Natural killer cell (primary cell): ENCODE measurements at regions of chr16 and their contacts with region 1.

Region 1: DNA sequence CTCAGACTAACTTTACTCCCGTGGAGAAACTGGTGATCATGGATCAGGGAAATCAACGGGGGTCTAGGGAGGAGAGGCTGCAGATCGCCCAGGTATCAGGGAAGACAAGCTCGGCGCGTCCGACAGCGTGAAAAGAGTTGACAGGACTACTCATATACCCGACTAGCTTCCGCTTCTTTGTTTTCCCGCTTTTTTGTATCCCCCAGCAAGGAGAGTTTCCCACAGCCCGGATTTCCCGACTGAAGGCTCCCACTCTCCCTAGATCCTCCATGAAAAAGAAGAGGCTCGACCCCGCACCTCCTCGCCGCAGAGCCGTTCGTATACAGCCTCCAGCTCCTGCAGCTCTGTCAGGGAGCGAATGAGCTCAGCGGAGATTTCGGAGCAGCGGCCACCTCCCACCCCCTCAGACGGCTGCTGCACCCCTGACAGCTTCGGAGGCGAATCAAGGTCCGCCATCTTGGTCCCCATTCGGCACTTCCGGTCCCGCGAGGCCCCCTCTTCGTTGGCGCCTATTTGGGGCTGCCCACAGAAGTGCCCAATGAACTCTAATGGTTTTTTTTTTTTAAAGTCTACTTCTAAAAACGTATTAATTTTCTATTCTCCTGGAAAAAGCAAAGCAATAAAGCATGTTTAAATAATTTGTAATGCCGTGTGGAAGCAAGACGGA is at the start of gene COG4:
- DNase-seq: peak; percentile 85 to 96
- ATAC-seq: peak; percentile 81 to 89 (median 84)
- H3K4me3 ChIP-seq: peak within 1 kb of the TSS; percentile 84
- H3K4me3 Mint-ChIP-seq: peak within 1 kb of the TSS; percentile 100
- H3K27ac ChIP-seq: peak within 1 kb of the TSS; percentile 90
- H3K27ac Mint-ChIP-seq: peak within 1 kb of the TSS; percentile 99 to 100
- H3K4me1 ChIP-seq: peaks cover 37% of the 10 kb centered on the region
- H3K4me1 Mint-ChIP-seq: peaks cover 60 to 61% of the 10 kb centered on the region in 2 donors
- H3K27me3 ChIP-seq: no peaks in the 10 kb centered on the region
- H3K27me3 Mint-ChIP-seq: no peaks in the 10 kb centered on the region
- CTCF ChIP-seq: no peak
- total RNA-seq, gene COG4: 29.5 to 44.4 (median 31.6) TPM

Region 2: DNA sequence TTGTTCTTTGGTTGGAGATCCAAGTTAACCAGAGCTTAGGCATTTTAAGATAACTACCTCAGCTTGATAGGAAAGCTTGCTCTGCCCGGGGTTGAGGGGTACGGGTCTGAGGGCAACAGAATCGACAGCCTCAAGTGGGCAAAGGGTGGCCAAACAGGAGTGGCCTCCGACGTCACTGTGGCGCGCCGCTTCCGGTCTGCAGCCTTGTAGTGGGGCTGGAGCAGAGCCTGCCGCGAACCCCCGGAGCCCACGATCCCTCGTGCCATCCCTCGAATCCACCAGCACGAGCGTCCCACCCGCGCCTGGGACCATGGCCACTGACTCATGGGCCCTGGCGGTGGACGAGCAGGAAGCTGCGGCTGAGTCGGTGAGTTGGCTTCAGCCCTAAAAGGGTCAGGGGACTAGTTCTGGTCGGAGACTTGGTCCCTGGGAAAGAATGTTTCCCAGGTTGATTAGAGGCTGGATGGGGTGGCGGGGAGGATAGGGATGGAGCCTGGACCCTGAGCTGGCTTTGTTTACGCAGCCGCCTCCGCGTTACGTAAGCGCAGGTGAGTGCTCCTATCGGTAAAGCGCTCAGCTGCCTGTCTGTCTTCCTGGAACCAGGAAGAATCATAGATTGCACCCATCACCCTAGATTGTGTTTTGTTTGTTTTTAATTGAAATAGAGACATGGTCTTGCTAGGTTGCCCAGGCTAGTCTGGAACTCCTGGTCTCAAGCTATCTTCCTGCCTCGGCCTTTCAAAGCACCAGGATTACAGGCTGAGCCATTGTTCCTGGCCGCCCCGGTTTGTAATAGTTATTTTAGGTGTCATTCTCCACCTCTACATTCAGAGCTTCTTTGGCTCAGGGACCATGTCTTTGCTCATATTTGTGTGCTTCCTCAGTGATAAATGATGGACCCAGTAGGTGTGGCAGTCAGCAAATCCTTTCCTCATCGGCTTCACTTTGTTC is 223.9 kb before region 1 on chr16 and contains the start of gene DDX19B:
- intact Hi-C with region 1: loop called (anchors 2 kb)
- DNase-seq: peak; percentile 61 to 75
- ATAC-seq: peak; percentile 79 to 84 (median 84)
- H3K4me3 ChIP-seq: peak within 1 kb of the TSS; percentile 82
- H3K4me3 Mint-ChIP-seq: peak within 1 kb of the TSS; percentile 90
- H3K27ac ChIP-seq: peak within 1 kb of the TSS; percentile 92
- H3K27ac Mint-ChIP-seq: peak within 1 kb of the TSS; percentile 93 to 97
- H3K4me1 ChIP-seq: peaks cover 16% of the 10 kb centered on the region
- H3K4me1 Mint-ChIP-seq: peaks cover 38 to 42% of the 10 kb centered on the region in 2 donors
- H3K27me3 ChIP-seq: no peaks in the 10 kb centered on the region
- H3K27me3 Mint-ChIP-seq: no peaks in the 10 kb centered on the region
- CTCF ChIP-seq: no peak
- total RNA-seq, gene DDX19B: 39.9 to 52.6 (median 48.8) TPM

Region 3: GRCh38 chr16:70345840-70346239 is 177.4 kb before region 1 on chr16:
- intact Hi-C with region 1: loop called (anchors 1 kb)
- DNase-seq: no peak
- ATAC-seq: no peak
- H3K4me3 ChIP-seq: peak overlapping the region; percentile 84
- H3K4me3 Mint-ChIP-seq: peak overlapping the region; percentile 94
- H3K27ac ChIP-seq: peak overlapping the region; percentile 98
- H3K27ac Mint-ChIP-seq: peak overlapping the region; percentile 95 to 98
- H3K4me1 ChIP-seq: peaks cover 19% of the 10 kb centered on the region
- H3K4me1 Mint-ChIP-seq: peaks cover 16 to 19% of the 10 kb centered on the region in 2 donors
- H3K27me3 ChIP-seq: no peaks in the 10 kb centered on the region
- H3K27me3 Mint-ChIP-seq: no peaks in the 10 kb centered on the region
- CTCF ChIP-seq: no peak

Region 4: GRCh38 chr16:70380861-70381603 is 142.2 kb before region 1 on chr16:
- intact Hi-C with region 1: loop called (anchors 5 kb)
- DNase-seq: peak; percentile 92 to 98
- ATAC-seq: peak; percentile 93 to 98 (median 95)
- H3K4me3 ChIP-seq: peak overlapping the region; percentile 75
- H3K4me3 Mint-ChIP-seq: peak overlapping the region; percentile 99
- H3K27ac ChIP-seq: peak overlapping the region; percentile 69
- H3K27ac Mint-ChIP-seq: peak overlapping the region; percentile 90 to 91
- H3K4me1 ChIP-seq: peaks cover 29% of the 10 kb centered on the region
- H3K4me1 Mint-ChIP-seq: peaks cover 4 to 6% of the 10 kb centered on the region in 2 donors
- H3K27me3 ChIP-seq: no peaks in the 10 kb centered on the region
- H3K27me3 Mint-ChIP-seq: no peaks in the 10 kb centered on the region
- CTCF ChIP-seq: peak; percentile 17

Region 5: DNA sequence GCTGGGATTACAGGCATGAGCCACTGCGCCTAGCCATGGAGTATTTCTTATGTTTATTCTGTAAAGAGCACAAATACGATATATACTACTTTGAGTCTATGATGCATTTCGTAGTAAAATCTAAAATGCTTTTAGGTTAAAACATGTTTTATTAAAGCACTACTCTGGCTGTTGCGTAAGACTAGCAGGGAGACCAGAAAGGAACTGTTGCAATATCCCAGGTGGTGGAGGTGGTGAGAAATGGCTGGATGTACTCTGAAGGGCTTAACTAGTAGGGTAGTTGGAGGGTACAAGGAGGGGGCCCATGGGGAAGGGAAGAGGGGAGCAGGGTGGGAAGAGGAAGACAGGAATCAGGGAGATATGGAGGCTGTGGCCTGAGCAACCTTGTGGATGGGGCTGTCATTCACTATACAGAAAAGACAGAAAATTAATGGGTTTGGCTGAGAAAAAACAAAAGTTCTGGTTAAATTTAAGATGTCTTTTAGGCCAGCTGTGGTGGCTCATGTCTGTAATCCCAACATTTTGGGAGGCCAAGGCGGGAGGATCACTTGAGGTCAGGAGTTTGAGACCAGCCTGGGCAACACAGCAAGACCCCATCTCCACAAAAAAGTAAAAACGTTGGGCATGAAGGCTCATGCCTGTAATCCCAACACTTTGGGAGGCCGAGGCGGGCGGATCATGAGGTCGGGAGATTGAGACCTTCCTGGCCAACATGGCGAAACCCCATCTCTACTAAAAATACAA is 120.1 kb before region 1 on chr16:
- intact Hi-C with region 1: loop called (anchors 5 kb)
- DNase-seq: no peak
- ATAC-seq: no peak
- H3K4me3 ChIP-seq: no peak overlapping the region
- H3K4me3 Mint-ChIP-seq: peak overlapping the region; percentile 73
- H3K27ac ChIP-seq: no peak overlapping the region
- H3K27ac Mint-ChIP-seq: peak overlapping the region; percentile 53 to 86
- H3K4me1 ChIP-seq: peaks cover 28% of the 10 kb centered on the region
- H3K4me1 Mint-ChIP-seq: peaks cover 35 to 40% of the 10 kb centered on the region in 2 donors
- H3K27me3 ChIP-seq: no peaks in the 10 kb centered on the region
- H3K27me3 Mint-ChIP-seq: no peaks in the 10 kb centered on the region
- CTCF ChIP-seq: no peak

Region 6: GRCh38 chr16:70438969-70439862 is 84.0 kb before region 1 on chr16 and contains the start of gene ST3GAL2:
- intact Hi-C with region 1: loop called (anchors 1 kb)
- DNase-seq: peak; percentile 85 to 95
- ATAC-seq: peak; percentile 96 to 99 (median 96)
- H3K4me3 ChIP-seq: peak within 1 kb of the TSS; percentile 66
- H3K4me3 Mint-ChIP-seq: peak within 1 kb of the TSS; percentile 96
- H3K27ac ChIP-seq: peak within 1 kb of the TSS; percentile 41
- H3K27ac Mint-ChIP-seq: peak within 1 kb of the TSS; percentile 74 to 89
- H3K4me1 ChIP-seq: peaks cover 25% of the 10 kb centered on the region
- H3K4me1 Mint-ChIP-seq: peaks cover 19 to 24% of the 10 kb centered on the region in 2 donors
- H3K27me3 ChIP-seq: no peaks in the 10 kb centered on the region
- H3K27me3 Mint-ChIP-seq: no peaks in the 10 kb centered on the region
- CTCF ChIP-seq: no peak
- total RNA-seq, gene ST3GAL2: 25.9 to 39.1 (median 36.9) TPM